ENCODE measurements at regions of chr11 and their contacts with region 1.

Region 1: GRCh38 chr11:32326522-32326921 is 108.8 kb downstream of the WT1 start:
- DNase-seq: no peak
- H3K4me3 ChIP-seq: no peak overlapping the region
- H3K27ac ChIP-seq: no peak overlapping the region
- H3K4me1 ChIP-seq: peaks cover 11% of the 10 kb centered on the region
- H3K27me3 ChIP-seq: no peaks in the 10 kb centered on the region
- CTCF ChIP-seq: no peak
- POLR2A ChIP-seq: no peak

Region 2: DNA sequence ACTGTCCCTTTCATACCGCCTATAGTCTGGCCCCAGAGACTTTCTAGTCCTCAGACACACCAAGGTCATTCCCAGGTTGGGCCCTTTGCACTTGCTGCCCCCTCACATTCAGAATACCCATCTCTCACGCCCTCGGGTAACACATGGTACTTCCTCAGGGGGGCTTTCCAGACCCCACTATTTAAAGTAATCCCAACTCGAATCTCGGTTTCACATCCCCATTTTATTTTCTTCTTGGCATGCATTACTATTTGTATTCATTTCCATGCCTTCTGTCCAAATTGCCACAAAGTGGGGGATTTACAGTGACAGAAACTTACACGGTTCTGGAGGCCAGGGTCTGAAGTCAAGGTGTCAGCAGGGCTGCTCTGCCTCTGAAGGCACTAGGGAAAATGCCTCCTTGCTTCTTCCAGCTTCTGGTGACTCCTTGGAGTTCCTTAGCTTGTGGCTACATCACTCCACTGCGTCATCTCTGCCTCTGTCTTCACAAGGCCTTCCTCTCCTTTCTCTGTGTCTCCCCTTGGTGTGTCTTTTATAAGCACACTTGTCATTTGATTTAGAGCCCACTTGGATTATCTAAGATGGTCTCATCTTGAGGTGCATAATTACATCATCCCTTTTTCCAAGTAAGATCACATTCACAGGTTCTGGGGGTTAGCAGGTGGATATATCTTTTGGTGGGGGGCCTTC is 220.5 kb before region 1 on chr11:
- intact Hi-C with region 1: no loop called
- DNase-seq: no peak
- H3K4me3 ChIP-seq: no peak overlapping the region
- H3K27ac ChIP-seq: no peak overlapping the region
- H3K4me1 ChIP-seq: no peaks in the 10 kb centered on the region
- H3K27me3 ChIP-seq: no peaks in the 10 kb centered on the region
- CTCF ChIP-seq: no peak
- POLR2A ChIP-seq: no peak

Region 3: DNA sequence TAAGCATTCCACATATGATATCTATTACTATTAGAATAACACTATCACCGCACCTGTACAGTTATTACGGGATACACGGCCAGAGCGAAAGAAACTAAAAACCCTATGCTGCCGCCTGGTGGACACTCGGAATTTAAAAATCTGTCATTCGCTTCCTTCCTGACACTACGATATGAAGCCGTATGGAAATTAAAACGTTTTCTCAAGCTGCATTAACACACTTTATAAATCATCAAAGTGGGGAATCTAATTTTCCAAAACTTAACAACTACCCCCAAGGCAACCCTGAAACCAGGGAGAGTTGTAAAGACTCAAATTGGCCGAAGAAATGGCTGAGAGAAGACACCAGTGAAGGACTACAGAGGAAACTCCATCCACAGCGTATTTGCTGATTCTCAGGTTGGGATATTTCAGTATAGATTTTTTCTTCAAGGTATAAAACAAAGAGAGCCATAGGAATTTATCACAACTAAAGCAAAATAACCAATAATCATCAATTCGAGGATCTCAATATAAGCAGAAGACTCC is 466.5 kb after region 1 on chr11:
- intact Hi-C with region 1: loop called (anchors 10 kb)
- DNase-seq: peak; percentile 77
- H3K4me3 ChIP-seq: no peak overlapping the region
- H3K27ac ChIP-seq: no peak overlapping the region
- H3K4me1 ChIP-seq: no peaks in the 10 kb centered on the region
- H3K27me3 ChIP-seq: no peaks in the 10 kb centered on the region
- CTCF ChIP-seq: peak; percentile 72 to 77 (median 74)
- POLR2A ChIP-seq: no peak